IMR-90 (cell line): ENCODE measurements at regions of chr22 and their contacts with region 1.

Region 1: GRCh38 chr22:36010882-36011281 is 17.7 kb downstream of the RBFOX2 start:
- DNase-seq: peak; percentile 92
- ATAC-seq: peak; percentile 66
- H3K4me3 ChIP-seq: no peak overlapping the region
- H3K27ac ChIP-seq: peak overlapping the region; percentile 85; the same call in 1 of the 2 replicates
- H3K4me1 ChIP-seq: peaks cover 23% of the 10 kb centered on the region
- H3K27me3 ChIP-seq: no peaks in the 10 kb centered on the region
- CTCF ChIP-seq: no peak
- POLR2A ChIP-seq: no peak
- RAD21 ChIP-seq: no peak

Region 2: GRCh38 chr22:35995772-35996171 is 15.1 kb before region 1 on chr22:
- CTCF ChIA-PET with region 1: interaction called, 4 read pairs
- POLR2A ChIA-PET with region 1: interaction called, 4 read pairs
- dilution Hi-C with region 1: no loop called
- in situ Hi-C with region 1: no loop called
- intact Hi-C with region 1: loop called (anchors 2 kb)
- DNase-seq: peak; percentile 99
- ATAC-seq: peak; percentile 77
- H3K4me3 ChIP-seq: peak overlapping the region; percentile 2; the same call in 1 of the 2 replicates
- H3K27ac ChIP-seq: peak overlapping the region; percentile 93
- H3K4me1 ChIP-seq: peaks cover 23% of the 10 kb centered on the region
- H3K27me3 ChIP-seq: no peaks in the 10 kb centered on the region
- CTCF ChIP-seq: no peak
- POLR2A ChIP-seq: no peak
- RAD21 ChIP-seq: peak; percentile 31